ENCODE measurements at regions of chrX and their contacts with region 1.

Region 1: DNA sequence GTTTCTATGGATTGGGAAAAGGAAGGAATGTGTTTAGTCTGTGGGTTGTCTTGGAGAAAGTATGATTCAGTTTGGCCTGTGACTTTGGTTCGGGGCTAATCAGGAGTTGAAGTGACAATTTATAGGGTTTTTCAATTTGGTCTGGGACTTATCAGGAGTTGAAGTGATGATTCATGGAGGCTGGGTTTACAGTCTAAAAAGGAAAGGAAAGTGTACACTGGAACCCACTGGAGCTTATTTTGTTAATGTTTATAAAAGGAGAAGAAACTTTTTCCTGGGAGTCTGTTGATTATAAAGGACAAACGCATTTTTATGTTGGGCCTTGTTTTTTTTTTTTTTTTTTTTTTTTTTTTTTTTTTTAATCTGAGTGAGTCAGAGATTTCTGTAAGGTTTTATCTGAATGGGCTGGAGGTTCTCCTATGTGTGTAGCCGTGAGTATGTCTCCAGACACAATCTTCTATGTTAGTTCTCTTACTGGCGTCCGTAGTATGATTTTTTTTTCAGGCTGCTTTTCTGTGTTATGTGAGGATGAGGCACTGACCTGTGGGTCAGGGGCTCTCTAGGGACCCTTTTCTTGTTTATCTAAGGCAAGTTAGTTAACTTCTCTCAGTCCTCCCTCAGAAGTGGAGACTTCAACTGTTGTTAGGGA is 33.0 kb upstream of the RAB9B start:
- DNase-seq: no peak
- CTCF ChIP-seq: no peak

Region 2: GRCh38 chrX:104018126-104018525 is 153.1 kb after region 1 on chrX:
- in situ Hi-C with region 1: loop called (anchors 25 kb)
- DNase-seq: no peak
- CTCF ChIP-seq: no peak

Region 3: DNA sequence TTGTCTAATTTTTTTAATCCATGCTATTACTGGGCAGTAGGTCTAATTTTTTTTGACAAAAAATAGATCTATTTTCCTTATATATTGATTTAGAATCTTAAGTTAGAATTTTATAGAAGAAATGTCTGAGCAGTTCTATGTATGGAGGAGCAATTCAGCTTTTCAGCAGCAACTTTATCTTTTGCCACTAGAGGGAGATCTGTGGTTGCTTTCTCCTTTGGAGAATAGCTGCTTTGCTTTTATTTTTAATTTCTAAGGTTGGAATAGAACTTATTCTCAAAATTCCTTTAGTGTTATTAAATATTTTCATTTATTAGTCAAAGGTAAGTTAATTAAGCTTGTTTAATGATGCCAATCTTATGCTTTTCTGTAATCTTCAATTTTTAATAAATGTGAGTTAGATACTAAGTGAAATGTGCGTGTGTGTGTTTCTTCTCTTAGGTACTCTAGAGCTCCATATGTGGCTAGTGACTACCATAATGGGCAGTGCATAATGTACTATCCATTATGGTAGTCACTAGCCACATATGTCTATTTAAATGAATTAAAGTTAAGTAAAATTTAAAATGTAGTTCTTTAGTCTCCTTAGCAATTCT is 330.6 kb after region 1 on chrX:
- in situ Hi-C with region 1: no loop called
- DNase-seq: peak; percentile 34
- CTCF ChIP-seq: peak; percentile 54

Region 4: GRCh38 chrX:104351173-104351769 is 486.3 kb after region 1 on chrX:
- in situ Hi-C with region 1: no loop called
- DNase-seq: no peak
- CTCF ChIP-seq: no peak

Region 5: GRCh38 chrX:104816949-104817348 is 951.9 kb after region 1 on chrX:
- in situ Hi-C with region 1: no loop called
- DNase-seq: no peak
- CTCF ChIP-seq: no peak